IMR-90 (cell line): ENCODE measurements at regions of chr12 and their contacts with region 1.

Region 1: GRCh38 chr12:122946690-122947341 is 19.4 kb downstream of the ABCB9 start:
- DNase-seq: peak; percentile 100
- ATAC-seq: peak; percentile 92
- H3K4me3 ChIP-seq: no peak overlapping the region
- H3K27ac ChIP-seq: peak overlapping the region; percentile 74
- H3K4me1 ChIP-seq: peaks cover 22% of the 10 kb centered on the region
- H3K27me3 ChIP-seq: no peaks in the 10 kb centered on the region
- CTCF ChIP-seq: peak; percentile 49
- POLR2A ChIP-seq: no peak
- RAD21 ChIP-seq: peak; percentile 55

Region 2: GRCh38 chr12:122860346-122861090 is 86.3 kb before region 1 on chr12:
- CTCF ChIA-PET with region 1: interaction called, 5 read pairs
- POLR2A ChIA-PET with region 1: no interaction called
- dilution Hi-C with region 1: no loop called
- in situ Hi-C with region 1: no loop called
- intact Hi-C with region 1: loop called (anchors 1 kb)
- DNase-seq: peak; percentile 75
- ATAC-seq: peak; percentile 77
- H3K4me3 ChIP-seq: no peak overlapping the region
- H3K27ac ChIP-seq: no peak overlapping the region
- H3K4me1 ChIP-seq: peaks cover 3% of the 10 kb centered on the region; the same call in 1 of the 2 replicates
- H3K27me3 ChIP-seq: no peaks in the 10 kb centered on the region
- CTCF ChIP-seq: peak; percentile 91
- POLR2A ChIP-seq: peak; percentile 65
- RAD21 ChIP-seq: peak; percentile 95

Region 3: GRCh38 chr12:123546281-123546680 is 599.5 kb after region 1 on chr12:
- CTCF ChIA-PET with region 1: no interaction called
- POLR2A ChIA-PET with region 1: no interaction called
- dilution Hi-C with region 1: no loop called
- in situ Hi-C with region 1: no loop called
- intact Hi-C with region 1: no loop called
- DNase-seq: peak; percentile 40
- ATAC-seq: peak; percentile 99
- H3K4me3 ChIP-seq: no peak overlapping the region
- H3K27ac ChIP-seq: no peak overlapping the region
- H3K4me1 ChIP-seq: no peaks in the 10 kb centered on the region
- H3K27me3 ChIP-seq: peaks cover 20% of the 10 kb centered on the region
- CTCF ChIP-seq: no peak
- POLR2A ChIP-seq: no peak
- RAD21 ChIP-seq: no peak